ENCODE measurements at regions of chr4 and their contacts with region 1.

Region 1: DNA sequence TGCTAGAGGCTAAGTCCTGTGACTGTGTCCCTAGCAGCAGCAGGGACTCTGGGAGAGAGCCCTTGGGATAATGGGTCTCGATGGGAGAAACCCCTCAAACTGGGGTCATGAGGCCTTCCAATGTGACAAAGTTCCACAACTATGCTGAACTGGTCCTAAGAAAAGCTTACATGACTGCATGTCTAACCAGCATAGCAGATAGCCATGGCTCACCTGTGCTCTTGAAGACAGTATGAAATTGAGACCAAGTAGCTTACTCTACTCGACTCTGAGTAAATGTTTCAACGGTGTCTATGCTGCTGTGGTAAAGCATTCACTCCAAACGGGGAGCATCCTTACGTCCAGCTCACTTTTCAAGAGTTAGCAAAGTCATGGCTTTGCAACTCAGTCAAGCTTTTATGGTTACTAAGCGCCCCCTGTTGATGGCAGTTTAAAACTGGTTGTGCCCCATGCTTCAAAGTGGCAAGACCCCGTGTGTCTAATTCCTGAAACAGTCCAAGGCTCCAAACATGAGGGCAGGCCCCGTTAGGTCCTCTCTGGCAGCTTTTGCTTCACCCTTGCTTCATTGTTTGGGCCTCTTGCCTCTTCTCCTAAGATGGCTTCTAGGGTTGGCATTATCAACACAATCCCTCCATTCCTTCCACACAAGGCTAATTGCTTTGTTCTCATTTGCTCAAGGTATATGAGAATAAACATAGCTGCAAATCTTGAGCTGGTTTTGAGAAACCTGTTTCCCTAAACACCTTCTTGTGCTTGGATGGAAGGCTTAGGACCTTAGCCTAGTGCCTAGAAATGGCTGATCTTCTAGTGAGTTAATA is 46.6 kb downstream of the CCNG2 start:
- DNase-seq: peak; percentile 47 to 62
- ATAC-seq: peak; percentile 71

Region 2: DNA sequence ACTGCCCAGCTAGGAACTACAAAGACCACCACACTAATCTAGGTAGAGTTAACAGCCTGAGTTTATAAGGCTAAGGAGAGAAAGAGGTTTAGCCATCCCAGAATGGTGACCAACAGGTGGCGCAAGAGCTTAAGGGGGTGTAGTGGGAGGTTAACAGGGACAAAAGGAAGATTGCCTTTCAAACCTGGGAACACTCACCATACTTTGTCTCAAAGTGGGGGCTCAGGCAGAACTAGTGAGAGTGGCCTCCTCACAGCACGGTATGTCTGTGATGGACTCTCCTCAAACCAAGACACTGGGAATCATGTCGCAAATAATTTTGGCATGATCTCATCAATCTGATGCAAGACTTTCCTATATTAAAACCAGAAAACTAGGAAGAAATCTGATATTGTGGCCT is 151.2 kb before region 1 on chr4:
- intact Hi-C with region 1: loop called in 1 of 2 experiments (anchors 10 kb)
- DNase-seq: peak; percentile 46 to 79
- ATAC-seq: peak; percentile 57

Region 3: GRCh38 chr4:77095101-77095821 is 108.3 kb before region 1 on chr4:
- intact Hi-C with region 1: loop called in 1 of 2 experiments (anchors 5 kb)
- DNase-seq: peak; percentile 77 to 86
- ATAC-seq: peak; percentile 99